ENCODE measurements at regions of chr11 and their contacts with region 1.

Region 1: DNA sequence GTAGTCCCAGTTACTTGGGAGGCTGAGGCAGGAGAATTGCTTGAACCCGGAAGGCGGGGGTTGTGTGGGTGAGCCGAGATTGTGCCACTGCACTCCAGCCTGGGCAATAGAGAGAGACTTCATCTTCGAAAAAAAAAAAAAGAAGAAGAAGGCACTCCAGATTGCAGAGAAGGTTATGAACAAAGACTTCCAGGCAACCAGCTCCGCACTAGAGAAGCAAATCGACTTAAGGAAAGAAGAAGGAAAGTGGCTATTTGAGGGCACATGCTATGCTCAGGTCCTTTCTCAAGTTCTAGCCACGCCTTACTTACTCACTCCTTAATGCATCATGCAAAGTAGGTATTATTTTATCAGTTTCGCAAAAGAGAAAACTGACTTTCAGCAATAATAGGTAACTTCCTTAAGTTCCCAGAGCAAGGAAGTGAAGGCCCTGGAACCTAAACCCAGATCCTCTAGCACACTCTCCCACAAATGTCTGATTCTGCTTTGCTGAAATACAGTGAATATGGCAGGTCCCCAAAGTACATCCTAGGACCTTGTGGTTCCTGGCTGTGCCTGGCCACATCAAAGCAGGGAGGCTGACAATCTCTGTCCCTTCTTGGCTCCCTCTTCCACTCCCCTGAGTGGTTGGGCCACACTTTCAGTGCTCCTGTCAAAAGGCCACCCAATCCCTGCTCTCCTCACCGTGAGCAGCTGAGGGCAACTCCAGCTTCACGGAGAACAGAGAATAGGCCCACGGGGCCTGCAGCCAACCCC is 14.2 kb downstream of the CD3E start:
- DNase-seq: no peak
- ATAC-seq: no peak
- H3K4me3 ChIP-seq: no peak overlapping the region
- H3K27ac ChIP-seq: no peak overlapping the region
- H3K4me1 ChIP-seq: peaks cover 8% of the 10 kb centered on the region
- H3K27me3 ChIP-seq: no peaks in the 10 kb centered on the region
- CTCF ChIP-seq: no peak

Region 2: DNA sequence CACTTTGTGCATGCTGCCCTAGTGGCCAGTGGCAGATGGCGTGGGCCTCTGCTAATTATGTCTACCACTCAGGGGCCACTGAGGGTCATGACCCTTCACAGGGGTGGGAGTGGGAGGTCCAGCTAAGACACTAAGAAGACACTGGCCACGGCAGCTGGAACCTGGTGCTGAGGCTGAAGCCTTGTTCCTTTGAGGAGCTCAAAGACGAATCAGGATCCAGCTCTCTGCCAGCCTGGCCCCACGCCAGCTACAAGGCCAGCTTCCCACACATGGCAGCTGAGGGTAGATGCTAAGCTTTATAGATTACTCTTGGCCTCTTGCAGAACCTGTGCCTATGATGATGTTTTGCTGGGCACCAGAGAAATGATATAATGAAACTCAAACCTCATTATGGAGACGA is 748.1 kb before region 1 on chr11:
- CTCF ChIA-PET with region 1: no interaction called
- POLR2A ChIA-PET with region 1: no interaction called
- in situ Hi-C with region 1: no loop called
- intact Hi-C with region 1: no loop called
- DNase-seq: no peak
- ATAC-seq: no peak
- H3K4me3 ChIP-seq: no peak overlapping the region
- H3K27ac ChIP-seq: no peak overlapping the region
- H3K4me1 ChIP-seq: no peaks in the 10 kb centered on the region
- H3K27me3 ChIP-seq: no peaks in the 10 kb centered on the region; the same call in 1 of the 2 replicates
- CTCF ChIP-seq: no peak

Region 3: DNA sequence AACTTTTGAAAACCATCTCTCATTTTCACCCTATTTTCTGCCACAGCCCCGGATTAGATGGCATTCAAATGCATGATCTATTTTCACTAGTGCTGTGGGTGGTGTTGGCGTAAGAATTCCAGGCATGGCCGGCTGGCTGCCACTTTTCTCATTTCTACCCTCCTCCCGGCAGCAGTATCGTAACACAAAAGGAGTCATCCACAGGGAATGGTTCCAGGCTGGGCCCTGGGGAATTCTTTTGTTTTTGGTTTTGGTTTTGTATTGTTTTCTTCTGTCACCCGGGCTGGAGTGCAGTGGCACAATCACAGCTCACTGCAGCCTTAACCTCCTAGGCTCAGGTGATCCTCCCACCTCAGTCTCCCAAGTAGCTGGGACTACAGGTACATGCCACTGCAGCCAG is 107.8 kb before region 1 on chr11:
- CTCF ChIA-PET with region 1: interaction called, 10 read pairs
- POLR2A ChIA-PET with region 1: no interaction called
- in situ Hi-C with region 1: no loop called
- intact Hi-C with region 1: no loop called
- DNase-seq: no peak
- ATAC-seq: no peak
- H3K4me3 ChIP-seq: no peak overlapping the region
- H3K27ac ChIP-seq: no peak overlapping the region
- H3K4me1 ChIP-seq: no peaks in the 10 kb centered on the region
- H3K27me3 ChIP-seq: peaks cover 58% of the 10 kb centered on the region
- CTCF ChIP-seq: no peak

Measured in Panc1 (cell line).